ENCODE measurements at regions of chr13 and their contacts with region 1.

Region 1: GRCh38 chr13:68264692-68265091 is 1034.6 kb upstream of the PCDH9 start:
- DNase-seq: no peak
- ATAC-seq: no peak
- H3K4me3 ChIP-seq: no peak overlapping the region
- H3K27ac ChIP-seq: no peak overlapping the region
- H3K4me1 ChIP-seq: no peaks in the 10 kb centered on the region
- H3K27me3 ChIP-seq: no peaks in the 10 kb centered on the region
- CTCF ChIP-seq: no peak

Region 2: GRCh38 chr13:67932991-67933390 is 331.7 kb before region 1 on chr13:
- intact Hi-C with region 1: loop called in 1 of 2 experiments (anchors 5 kb)
- DNase-seq: no peak
- ATAC-seq: no peak
- H3K4me3 ChIP-seq: no peak overlapping the region
- H3K27ac ChIP-seq: no peak overlapping the region
- H3K4me1 ChIP-seq: no peaks in the 10 kb centered on the region
- H3K27me3 ChIP-seq: no peaks in the 10 kb centered on the region
- CTCF ChIP-seq: no peak

Region 3: GRCh38 chr13:68358294-68358705 is 93.6 kb after region 1 on chr13:
- intact Hi-C with region 1: no loop called
- DNase-seq: no peak
- ATAC-seq: no peak
- H3K4me3 ChIP-seq: no peak overlapping the region
- H3K27ac ChIP-seq: no peak overlapping the region
- H3K4me1 ChIP-seq: no peaks in the 10 kb centered on the region
- H3K27me3 ChIP-seq: no peaks in the 10 kb centered on the region
- CTCF ChIP-seq: no peak